ENCODE measurements at regions of chr20 and their contacts with region 1.

Region 1: GRCh38 chr20:32652739-32653526 is 20.8 kb downstream of the C20orf203 start:
- DNase-seq: peak; percentile 77
- H3K4me3 Mint-ChIP-seq: no peak overlapping the region
- H3K27ac Mint-ChIP-seq: no peak overlapping the region
- H3K4me1 Mint-ChIP-seq: peaks cover 5% of the 10 kb centered on the region
- H3K27me3 Mint-ChIP-seq: peaks cover 5% of the 10 kb centered on the region

Region 2: GRCh38 chr20:31861346-31862156 is 791.4 kb before region 1 on chr20:
- intact Hi-C with region 1: loop called (anchors 10 kb)
- DNase-seq: peak; percentile 49
- H3K4me3 Mint-ChIP-seq: peak overlapping the region; percentile 58
- H3K27ac Mint-ChIP-seq: no peak overlapping the region
- H3K4me1 Mint-ChIP-seq: peaks cover 10% of the 10 kb centered on the region
- H3K27me3 Mint-ChIP-seq: peaks cover 39% of the 10 kb centered on the region

Region 3: GRCh38 chr20:32521780-32522525 is 131.0 kb before region 1 on chr20:
- intact Hi-C with region 1: loop called (anchors 1 kb)
- DNase-seq: peak; percentile 53
- H3K4me3 Mint-ChIP-seq: no peak overlapping the region
- H3K27ac Mint-ChIP-seq: peak overlapping the region; percentile 44
- H3K4me1 Mint-ChIP-seq: peaks cover 43% of the 10 kb centered on the region
- H3K27me3 Mint-ChIP-seq: no peaks in the 10 kb centered on the region

Region 4: GRCh38 chr20:32583581-32584070 is 69.3 kb before region 1 on chr20:
- intact Hi-C with region 1: loop called (anchors 1 kb)
- DNase-seq: no peak
- H3K4me3 Mint-ChIP-seq: no peak overlapping the region
- H3K27ac Mint-ChIP-seq: no peak overlapping the region
- H3K4me1 Mint-ChIP-seq: peaks cover 36% of the 10 kb centered on the region
- H3K27me3 Mint-ChIP-seq: peaks cover 21% of the 10 kb centered on the region

Measured in activated T-helper 1 cell treated with anti-CD3 and anti-CD28 coated beads, Interleukin-12 subunit alpha, Interleukin-12 subunit beta, Interleukin-2, Interleukin-4 antibody, amounts not matched to agents 30 ng/mL and 10 ng/mL and 1 ng/mL, durations not matched to agents 14 hours and 24 hours and 36 hours (primary cell).